Lower lobe of right lung (tissue), 2 donors: ENCODE measurements at regions of chr1 and their contacts with region 1.

Region 1: GRCh38 chr1:244599937-244600350 is 53.0 kb upstream of the DESI2 start:
- DNase-seq: no peak
- ATAC-seq: peak; percentile 64 to 65
- H3K4me3 ChIP-seq: peak overlapping the region; percentile 11
- H3K27ac ChIP-seq: no peak overlapping the region
- H3K4me1 ChIP-seq: peaks cover 7% of the 10 kb centered on the region
- H3K27me3 ChIP-seq: no peaks in the 10 kb centered on the region
- CTCF ChIP-seq: no peak

Region 2: GRCh38 chr1:245045087-245045881 is 445.3 kb after region 1 on chr1:
- intact Hi-C with region 1: loop called (anchors 10 kb)
- DNase-seq: no peak
- ATAC-seq: peak in 1 of 2 donors; percentile 6
- H3K4me3 ChIP-seq: no peak overlapping the region
- H3K27ac ChIP-seq: no peak overlapping the region
- H3K4me1 ChIP-seq: peaks cover 9% of the 10 kb centered on the region
- H3K27me3 ChIP-seq: no peaks in the 10 kb centered on the region
- CTCF ChIP-seq: no peak